ENCODE measurements at regions of chr5 and their contacts with region 1.

Region 1: GRCh38 chr5:6712577-6713275 is 506 bp upstream of the TENT4A start:
- DNase-seq: peak; percentile 94
- ATAC-seq: peak; percentile 79
- H3K4me3 ChIP-seq: peak overlapping the region; percentile 78
- H3K27ac ChIP-seq: peak overlapping the region; percentile 88
- H3K4me1 ChIP-seq: peaks cover 19% of the 10 kb centered on the region
- H3K27me3 ChIP-seq: no peaks in the 10 kb centered on the region
- CTCF ChIP-seq: no peak
- POLR2A ChIP-seq: peak; percentile 74
- RAD21 ChIP-seq: no peak

Region 2: GRCh38 chr5:6632917-6633468 is 79.7 kb before region 1 on chr5 and contains the starts of genes NSUN2 and SRD5A1:
- CTCF ChIA-PET with region 1: no interaction called
- POLR2A ChIA-PET with region 1: no interaction called
- dilution Hi-C with region 1: no loop called
- in situ Hi-C with region 1: no loop called
- intact Hi-C with region 1: loop called (anchors 2 kb)
- DNase-seq: peak; percentile 89
- ATAC-seq: peak; percentile 94
- H3K4me3 ChIP-seq: peak within 1 kb of the TSS; percentile 89
- H3K27ac ChIP-seq: peak within 1 kb of the TSS; percentile 92
- H3K4me1 ChIP-seq: peaks cover 11% of the 10 kb centered on the region
- H3K27me3 ChIP-seq: no peaks in the 10 kb centered on the region
- CTCF ChIP-seq: no peak
- POLR2A ChIP-seq: peak; percentile 78
- RAD21 ChIP-seq: no peak
- total RNA-seq, gene NSUN2: 51.1 and 55.5 TPM in 2 replicates
- total RNA-seq, gene SRD5A1: 6.3 and 9.7 TPM in 2 replicates

Measured in IMR-90 (cell line).